GM12878 (cell line): ENCODE measurements at regions of chr14 and their contacts with region 1.

Region 1: DNA sequence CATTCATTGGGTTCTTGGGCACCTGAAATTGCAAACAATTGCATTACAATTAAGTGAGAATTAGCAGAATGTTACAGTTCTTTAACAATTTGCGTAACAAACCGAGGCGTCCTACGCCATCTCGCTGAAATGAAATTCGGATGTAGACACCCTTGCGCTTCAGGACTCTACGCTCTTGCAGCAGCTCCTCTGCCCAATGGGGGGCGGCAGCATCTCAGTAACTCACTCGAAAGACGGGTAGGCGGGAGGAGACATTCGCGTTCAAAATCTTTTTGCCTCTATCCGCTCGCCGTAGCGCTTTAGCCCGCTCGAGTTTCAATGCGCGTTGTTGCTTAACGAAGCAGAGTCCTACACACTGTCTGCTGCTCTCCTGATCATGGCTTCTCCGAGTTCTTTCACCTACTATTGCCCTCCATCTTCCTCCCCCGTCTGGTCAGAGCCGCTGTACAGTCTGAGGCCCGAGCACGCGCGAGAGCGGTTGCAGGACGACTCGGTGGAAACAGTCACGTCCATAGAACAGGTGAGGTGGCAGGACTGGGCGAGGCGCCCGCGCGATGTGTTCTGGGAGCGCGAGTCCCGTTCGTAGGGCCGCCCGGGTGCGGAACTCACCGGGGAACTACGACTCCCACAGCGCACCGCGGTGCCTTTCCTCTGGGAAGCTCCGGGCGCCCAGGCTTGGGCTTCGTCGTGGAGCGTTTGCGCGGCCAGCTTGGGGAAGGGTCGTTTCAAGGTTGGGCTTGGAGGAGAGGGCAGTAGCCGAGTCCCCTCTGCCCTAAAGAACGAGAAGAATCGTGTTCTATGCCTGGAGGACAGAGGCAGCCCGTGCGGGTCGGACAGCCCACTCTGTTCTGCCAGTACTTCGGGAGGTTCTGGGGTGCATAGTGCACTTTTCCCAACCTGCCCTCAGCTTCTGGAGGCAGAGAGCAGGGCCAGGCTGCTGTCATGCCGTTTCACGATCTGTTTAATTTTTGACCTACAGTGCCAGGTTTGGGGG is at the start of gene FNTB:
- DNase-seq: peak; percentile 94
- ATAC-seq: peak; percentile 99
- H3K4me3 ChIP-seq: peak within 1 kb of the TSS; percentile 93
- H3K27ac ChIP-seq: peak within 1 kb of the TSS; percentile 80
- H3K4me1 ChIP-seq: peaks cover 26% of the 10 kb centered on the region
- H3K27me3 ChIP-seq: no peaks in the 10 kb centered on the region
- CTCF ChIP-seq: peak; percentile 78 to 99 (median 97); a peak in 5 of 6 replicates
- EP300 ChIP-seq: no peak
- POLR2A ChIP-seq: peak; percentile 82
- RAD21 ChIP-seq: peak; percentile 94
- polyA plus RNA-seq, gene FNTB: 10.4 to 14.2 TPM

Region 2: DNA sequence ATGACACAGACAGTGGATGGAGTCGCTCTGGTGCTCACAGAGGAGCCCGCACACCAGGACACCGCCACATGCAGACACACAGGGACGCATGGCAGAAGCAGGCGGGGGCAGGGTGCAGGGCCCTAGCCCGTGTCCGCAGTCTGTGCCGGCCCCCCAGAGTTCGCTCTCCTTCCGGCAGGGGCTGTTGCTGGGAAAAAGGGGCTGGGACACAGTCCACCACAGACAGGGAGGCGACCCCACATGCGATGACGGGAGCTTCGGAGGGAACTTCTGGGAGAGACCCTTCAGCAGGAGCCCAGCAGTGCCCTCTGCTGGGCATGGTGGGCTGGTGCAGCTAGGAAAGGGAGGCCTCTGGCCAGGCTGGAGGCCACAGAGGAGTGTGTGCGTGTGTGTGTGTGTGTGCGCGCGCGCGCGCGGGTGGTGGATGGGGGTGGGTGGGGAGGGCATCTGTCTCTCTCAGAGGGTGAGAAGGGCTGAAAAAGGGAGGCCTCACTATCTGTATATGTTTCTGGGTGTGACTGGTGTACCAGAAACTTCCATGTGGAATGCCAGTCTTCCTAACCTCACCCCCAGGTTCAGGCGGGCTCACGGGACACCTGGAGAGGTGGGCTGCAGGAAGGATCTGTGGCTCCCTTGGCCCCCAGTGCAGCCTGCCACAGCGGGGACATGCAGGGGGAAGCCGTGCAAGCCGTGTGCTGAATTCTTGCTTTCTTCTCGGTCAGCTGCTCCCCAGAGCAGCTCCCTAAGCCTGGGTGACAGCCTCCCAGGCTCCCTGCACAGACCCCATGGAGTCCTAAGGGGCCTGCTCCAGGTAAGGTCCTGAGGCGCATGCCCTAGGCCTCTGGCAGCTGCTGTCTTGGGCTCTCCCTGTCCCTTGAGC is 222.0 kb before region 1 on chr14:
- CTCF ChIA-PET with region 1: no interaction called
- POLR2A ChIA-PET with region 1: no interaction called
- RAD21 ChIA-PET with region 1: no interaction called
- SMC1A ChIA-PET with region 1: no interaction called
- in situ Hi-C with region 1: no loop called
- intact Hi-C with region 1: loop called (anchors 1 kb)
- DNase-seq: no peak
- ATAC-seq: peak; percentile 81
- H3K4me3 ChIP-seq: no peak overlapping the region
- H3K27ac ChIP-seq: no peak overlapping the region
- H3K4me1 ChIP-seq: no peaks in the 10 kb centered on the region
- H3K27me3 ChIP-seq: no peaks in the 10 kb centered on the region; a peak in 1 of 4 replicates
- CTCF ChIP-seq: peak; percentile 81 to 96 (median 85)
- EP300 ChIP-seq: no peak
- POLR2A ChIP-seq: no peak
- RAD21 ChIP-seq: peak; percentile 61

Region 3: DNA sequence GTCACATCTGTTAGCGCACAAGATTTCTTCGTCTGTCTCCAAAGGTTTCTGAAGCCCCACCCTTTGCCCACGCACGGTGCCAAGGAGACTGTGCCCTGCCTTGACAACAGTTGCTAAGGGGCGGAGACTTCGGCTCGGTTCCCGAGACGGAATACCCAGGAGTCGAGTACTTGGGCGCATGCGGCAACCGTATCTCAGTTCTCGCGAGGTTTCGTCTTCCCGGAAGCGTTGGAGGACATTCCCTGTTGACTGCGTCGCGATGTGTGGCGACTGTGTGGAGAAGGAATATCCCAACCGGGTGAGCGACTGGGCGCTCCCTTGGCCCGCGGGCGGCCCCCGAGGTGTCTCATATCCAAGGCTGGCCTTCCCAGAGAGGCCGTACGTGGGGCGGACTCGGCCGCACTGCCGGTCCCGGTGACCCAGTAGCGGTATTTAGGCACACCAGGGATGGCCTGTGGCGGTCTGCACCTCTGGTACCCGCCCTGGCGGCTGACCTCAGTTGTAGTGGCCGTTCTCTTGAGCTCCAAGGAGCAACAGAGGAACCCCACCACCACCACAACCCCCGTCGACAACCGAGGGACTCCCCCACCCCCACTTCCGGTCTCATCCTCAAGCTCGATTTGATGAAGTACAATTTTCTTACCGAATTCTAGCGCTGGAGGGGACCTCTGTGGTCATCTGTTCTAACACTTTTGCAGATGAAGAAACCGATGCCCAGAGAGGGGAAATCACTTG is 72.5 kb before region 1 on chr14 and contains the start of gene CHURC1:
- CTCF ChIA-PET with region 1: interaction called, 7 read pairs
- POLR2A ChIA-PET with region 1: interaction called, 9 read pairs
- RAD21 ChIA-PET with region 1: interaction called, 9 read pairs
- SMC1A ChIA-PET with region 1: interaction called, 5 read pairs
- in situ Hi-C with region 1: no loop called
- intact Hi-C with region 1: loop called (anchors 2 kb)
- DNase-seq: peak; percentile 93
- ATAC-seq: peak; percentile 98
- H3K4me3 ChIP-seq: peak within 1 kb of the TSS; percentile 79
- H3K27ac ChIP-seq: peak within 1 kb of the TSS; percentile 98
- H3K4me1 ChIP-seq: peaks cover 5% of the 10 kb centered on the region; the same call in 1 of the 2 replicates
- H3K27me3 ChIP-seq: no peaks in the 10 kb centered on the region
- CTCF ChIP-seq: no peak
- EP300 ChIP-seq: no peak
- POLR2A ChIP-seq: peak; percentile 96
- RAD21 ChIP-seq: no peak
- polyA plus RNA-seq, gene CHURC1: 408 to 421 TPM

Region 4: DNA sequence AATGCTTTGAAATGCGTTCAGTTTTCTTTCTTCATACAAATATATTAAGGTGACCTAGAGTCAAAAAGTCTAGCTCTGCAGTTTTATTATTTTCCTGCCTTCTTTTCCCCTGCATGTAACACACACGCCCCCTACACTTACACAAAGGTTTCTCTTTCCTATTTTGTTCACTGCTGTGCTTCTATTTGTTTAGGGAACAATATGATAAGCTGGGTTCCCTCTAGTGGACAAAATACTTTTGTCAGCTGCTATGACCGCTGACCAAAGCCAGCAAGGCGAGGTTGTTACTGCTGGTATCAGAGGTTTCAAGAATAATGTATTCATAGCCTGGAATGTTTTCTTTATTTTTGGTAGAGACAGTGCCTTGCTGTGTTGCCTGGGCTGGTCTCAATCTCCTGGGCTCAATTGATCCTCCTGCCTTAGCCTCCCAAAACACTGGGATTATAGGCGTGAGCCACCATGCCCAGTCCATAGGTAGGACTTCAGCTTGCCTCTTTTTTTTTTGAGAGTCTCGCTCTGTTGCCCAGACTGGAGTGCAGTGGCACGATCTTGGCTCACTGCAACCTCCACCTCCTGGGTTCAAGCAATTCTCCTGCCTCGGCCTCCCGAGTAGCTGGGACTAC is 33.2 kb after region 1 on chr14:
- CTCF ChIA-PET with region 1: interaction called, 109 read pairs
- POLR2A ChIA-PET with region 1: interaction called, 3 read pairs
- RAD21 ChIA-PET with region 1: interaction called, 28 read pairs
- SMC1A ChIA-PET with region 1: interaction called, 25 read pairs
- in situ Hi-C with region 1: no loop called
- intact Hi-C with region 1: loop called (anchors 1 kb)
- DNase-seq: no peak
- ATAC-seq: peak; percentile 91
- H3K4me3 ChIP-seq: no peak overlapping the region
- H3K27ac ChIP-seq: no peak overlapping the region
- H3K4me1 ChIP-seq: no peaks in the 10 kb centered on the region
- H3K27me3 ChIP-seq: no peaks in the 10 kb centered on the region
- CTCF ChIP-seq: peak; percentile 41 to 69 (median 68); a peak in 5 of 6 replicates
- EP300 ChIP-seq: no peak
- POLR2A ChIP-seq: no peak
- RAD21 ChIP-seq: peak; percentile 85

Region 5: DNA sequence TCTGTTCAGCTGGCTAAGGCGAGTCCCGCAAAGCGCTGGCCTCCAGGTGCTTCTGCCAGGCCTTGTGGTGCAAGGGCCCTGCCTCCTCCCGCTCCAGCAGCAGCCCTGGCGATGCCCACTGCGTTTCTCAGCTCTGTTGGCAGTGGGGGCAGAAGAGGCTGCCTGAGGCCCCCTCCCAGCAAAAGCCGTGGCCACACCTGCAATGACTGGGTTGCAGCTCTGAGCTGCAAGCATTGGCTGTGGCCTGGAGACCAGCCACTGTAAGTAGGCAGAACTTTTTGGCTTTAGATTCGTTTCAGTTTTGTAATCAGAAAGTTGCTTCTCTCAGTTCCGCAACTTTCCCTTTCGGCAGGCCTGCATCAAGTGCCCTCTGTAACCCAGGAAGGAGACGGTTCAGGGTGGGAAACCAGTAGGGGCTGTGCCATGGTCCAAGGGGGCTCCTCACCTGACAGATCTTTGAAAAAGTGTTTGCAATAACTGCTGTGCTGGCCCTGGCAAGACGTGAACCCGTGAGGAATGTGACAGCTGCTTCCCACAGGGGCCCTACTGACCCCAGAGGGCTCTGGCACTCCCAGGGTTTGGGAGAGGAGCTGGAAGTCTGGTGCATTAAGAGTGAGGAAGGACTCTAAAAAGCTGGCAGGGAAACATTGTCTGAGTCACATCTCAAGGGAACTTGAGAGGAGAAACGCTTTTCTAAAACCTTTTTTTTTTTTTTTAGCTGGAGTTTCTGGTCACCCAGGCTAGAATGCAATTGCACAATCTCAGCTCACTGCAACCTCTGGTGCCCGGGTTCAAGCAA is 169.9 kb after region 1 on chr14:
- CTCF ChIA-PET with region 1: interaction called, 5 read pairs
- POLR2A ChIA-PET with region 1: no interaction called
- RAD21 ChIA-PET with region 1: no interaction called
- SMC1A ChIA-PET with region 1: interaction called, 3 read pairs
- in situ Hi-C with region 1: no loop called
- intact Hi-C with region 1: loop called (anchors 5 kb)
- DNase-seq: peak; percentile 45
- ATAC-seq: peak; percentile 92
- H3K4me3 ChIP-seq: peak overlapping the region; percentile 48; the same call in 1 of the 2 replicates
- H3K27ac ChIP-seq: peak overlapping the region; percentile 85
- H3K4me1 ChIP-seq: peaks cover 48% of the 10 kb centered on the region
- H3K27me3 ChIP-seq: no peaks in the 10 kb centered on the region
- CTCF ChIP-seq: no peak
- EP300 ChIP-seq: 0 out of 4 replicates have a peak, but pooled peaks of 1 of the 2 experiments have one; percentile 46
- POLR2A ChIP-seq: no peak
- RAD21 ChIP-seq: no peak